Activated CD4-positive, alpha-beta T cell treated with anti-CD3 and anti-CD28 coated beads for 36 hours (primary cell): ENCODE measurements at regions of chr16 and their contacts with region 1.

Region 1: DNA sequence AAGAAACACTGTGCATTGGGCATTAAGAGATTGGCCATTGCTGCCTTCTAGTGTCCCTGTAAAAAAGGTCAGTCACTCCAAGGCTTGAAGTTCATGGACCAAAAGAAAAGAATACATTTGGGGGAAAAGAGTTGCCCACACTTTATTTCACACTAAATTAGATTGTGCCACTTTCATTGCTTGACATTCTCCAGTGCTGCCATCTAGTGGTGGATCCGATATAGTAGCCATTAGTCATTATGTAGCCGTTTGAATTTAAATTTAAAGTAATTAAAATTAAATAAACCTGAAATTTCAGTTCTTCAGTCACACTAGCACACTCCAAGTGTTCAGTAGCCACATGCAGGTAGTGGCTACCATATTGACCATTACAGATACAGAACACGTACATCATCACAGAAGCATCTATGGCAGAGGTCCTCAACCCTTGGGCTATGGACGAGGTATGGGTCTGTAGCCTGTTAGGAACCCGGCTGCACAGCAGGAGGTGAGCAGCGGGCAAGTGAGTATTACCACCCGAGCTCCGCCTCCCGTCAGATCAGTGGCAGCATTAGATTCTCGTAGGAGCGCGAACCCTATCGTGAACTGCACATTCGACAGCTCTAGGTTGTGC is 21.9 kb upstream of the CDH5 start:
- DNase-seq: peak; percentile 58
- ATAC-seq: no peak
- H3K4me3 Mint-ChIP-seq: no peak overlapping the region
- H3K27ac Mint-ChIP-seq: no peak overlapping the region
- H3K4me1 Mint-ChIP-seq: no peaks in the 10 kb centered on the region
- H3K27me3 Mint-ChIP-seq: peaks cover 30% of the 10 kb centered on the region

Region 2: GRCh38 chr16:65975049-65976009 is 369.3 kb before region 1 on chr16:
- CTCF ChIA-PET with region 1: no interaction called
- POLR2A ChIA-PET with region 1: no interaction called
- intact Hi-C with region 1: no loop called
- DNase-seq: peak; percentile 15
- ATAC-seq: no peak
- H3K4me3 Mint-ChIP-seq: no peak overlapping the region
- H3K27ac Mint-ChIP-seq: no peak overlapping the region
- H3K4me1 Mint-ChIP-seq: no peaks in the 10 kb centered on the region
- H3K27me3 Mint-ChIP-seq: peaks cover 4% of the 10 kb centered on the region

Region 3: DNA sequence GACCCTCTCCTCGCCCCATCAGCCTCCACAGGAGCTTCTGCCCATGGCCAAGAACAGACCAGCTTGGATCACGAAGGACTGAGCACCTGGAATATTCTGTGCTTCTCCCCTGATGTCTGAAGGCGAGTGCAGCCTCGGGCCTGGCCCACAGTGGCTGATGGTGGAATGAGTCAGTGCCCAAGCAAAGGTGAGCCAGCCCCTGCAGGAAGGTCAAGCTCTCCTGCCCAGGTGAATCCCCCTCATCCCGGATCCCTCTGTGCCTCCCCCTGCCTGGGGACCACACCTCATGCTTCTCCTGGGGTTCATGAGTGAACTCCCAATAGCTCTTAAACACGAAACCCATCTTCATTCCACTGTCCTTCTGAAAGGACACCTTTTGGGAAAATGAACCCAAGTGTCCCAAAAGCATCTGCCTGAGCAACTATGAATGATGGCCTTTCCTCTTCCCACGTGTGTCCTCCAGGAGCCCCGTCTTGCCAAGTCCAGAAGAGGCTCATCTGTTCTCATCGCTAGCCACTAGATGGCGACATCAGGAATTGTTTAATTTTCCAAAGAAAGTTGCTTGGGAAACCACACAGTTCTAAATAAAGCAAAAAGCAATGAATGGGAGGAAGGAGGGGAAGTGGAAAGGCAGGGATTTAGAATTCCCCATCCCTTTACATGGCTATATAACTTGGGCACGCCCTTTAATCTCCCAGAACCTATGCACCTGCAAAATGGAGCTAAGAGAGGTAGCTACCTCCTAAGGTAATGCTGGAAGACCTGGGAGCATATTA is 12.7 kb after region 1 on chr16:
- CTCF ChIA-PET with region 1: interaction called, 27 read pairs
- POLR2A ChIA-PET with region 1: no interaction called
- intact Hi-C with region 1: no loop called
- DNase-seq: peak; percentile 42
- ATAC-seq: peak; percentile 39
- H3K4me3 Mint-ChIP-seq: no peak overlapping the region
- H3K27ac Mint-ChIP-seq: no peak overlapping the region
- H3K4me1 Mint-ChIP-seq: peaks cover 3% of the 10 kb centered on the region
- H3K27me3 Mint-ChIP-seq: peaks cover 31% of the 10 kb centered on the region

Region 4: DNA sequence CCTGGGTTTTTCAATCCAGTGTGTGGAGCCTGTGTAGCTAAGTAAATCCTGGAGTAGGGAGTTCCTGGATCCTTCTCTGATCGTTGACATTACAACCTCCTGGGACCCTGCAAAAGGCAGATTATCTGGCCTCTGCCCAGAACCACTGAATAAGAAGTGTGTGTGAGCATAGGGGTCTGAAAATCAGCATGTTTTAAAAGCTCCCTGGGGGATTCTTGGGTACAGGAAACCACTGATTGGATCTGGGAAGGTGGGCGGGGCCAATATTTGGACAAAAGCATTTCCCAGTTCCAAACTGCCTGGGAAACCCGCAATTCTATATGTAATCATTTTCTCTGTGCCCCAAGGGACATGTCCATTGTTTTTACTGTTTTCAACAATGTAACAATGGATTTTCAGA is 55.3 kb after region 1 on chr16:
- CTCF ChIA-PET with region 1: no interaction called
- POLR2A ChIA-PET with region 1: no interaction called
- intact Hi-C with region 1: no loop called
- DNase-seq: no peak
- ATAC-seq: no peak
- H3K4me3 Mint-ChIP-seq: no peak overlapping the region
- H3K27ac Mint-ChIP-seq: no peak overlapping the region
- H3K4me1 Mint-ChIP-seq: no peaks in the 10 kb centered on the region
- H3K27me3 Mint-ChIP-seq: peaks cover 7% of the 10 kb centered on the region

Region 5: DNA sequence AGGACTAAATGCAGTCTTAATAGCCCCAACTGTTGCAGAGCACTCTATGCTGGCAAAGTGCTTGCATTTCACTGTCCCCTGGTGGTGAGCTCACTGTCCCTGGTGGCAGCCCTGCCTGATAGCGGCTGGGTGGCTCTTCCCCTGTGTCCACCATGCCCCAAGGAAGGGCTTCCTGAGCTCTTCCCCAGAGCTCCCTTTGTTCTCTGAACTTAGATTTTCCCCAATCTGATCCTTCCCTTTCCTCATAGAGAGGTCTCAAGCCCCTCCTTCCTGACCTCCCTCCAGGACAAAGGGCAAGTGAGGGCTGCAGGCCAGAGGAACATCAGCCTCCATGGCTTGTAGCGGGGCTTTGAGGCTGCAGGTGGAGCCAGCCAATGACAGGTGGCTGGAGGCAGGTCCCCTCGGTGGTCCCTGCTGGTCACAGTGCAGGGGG is 99.4 kb after region 1 on chr16:
- CTCF ChIA-PET with region 1: no interaction called
- POLR2A ChIA-PET with region 1: no interaction called
- intact Hi-C with region 1: no loop called
- DNase-seq: no peak
- ATAC-seq: no peak
- H3K4me3 Mint-ChIP-seq: no peak overlapping the region
- H3K27ac Mint-ChIP-seq: no peak overlapping the region
- H3K4me1 Mint-ChIP-seq: no peaks in the 10 kb centered on the region
- H3K27me3 Mint-ChIP-seq: peaks cover 11% of the 10 kb centered on the region

Region 6: GRCh38 chr16:66462912-66463311 is 118.3 kb after region 1 on chr16:
- CTCF ChIA-PET with region 1: no interaction called
- POLR2A ChIA-PET with region 1: no interaction called
- intact Hi-C with region 1: no loop called
- DNase-seq: no peak
- ATAC-seq: no peak
- H3K4me3 Mint-ChIP-seq: no peak overlapping the region
- H3K27ac Mint-ChIP-seq: no peak overlapping the region
- H3K4me1 Mint-ChIP-seq: peaks cover 3% of the 10 kb centered on the region
- H3K27me3 Mint-ChIP-seq: peaks cover 21% of the 10 kb centered on the region